Adrenal gland (tissue), 19 donors: ENCODE measurements at regions of chr17 and their contacts with region 1.

Region 1: DNA sequence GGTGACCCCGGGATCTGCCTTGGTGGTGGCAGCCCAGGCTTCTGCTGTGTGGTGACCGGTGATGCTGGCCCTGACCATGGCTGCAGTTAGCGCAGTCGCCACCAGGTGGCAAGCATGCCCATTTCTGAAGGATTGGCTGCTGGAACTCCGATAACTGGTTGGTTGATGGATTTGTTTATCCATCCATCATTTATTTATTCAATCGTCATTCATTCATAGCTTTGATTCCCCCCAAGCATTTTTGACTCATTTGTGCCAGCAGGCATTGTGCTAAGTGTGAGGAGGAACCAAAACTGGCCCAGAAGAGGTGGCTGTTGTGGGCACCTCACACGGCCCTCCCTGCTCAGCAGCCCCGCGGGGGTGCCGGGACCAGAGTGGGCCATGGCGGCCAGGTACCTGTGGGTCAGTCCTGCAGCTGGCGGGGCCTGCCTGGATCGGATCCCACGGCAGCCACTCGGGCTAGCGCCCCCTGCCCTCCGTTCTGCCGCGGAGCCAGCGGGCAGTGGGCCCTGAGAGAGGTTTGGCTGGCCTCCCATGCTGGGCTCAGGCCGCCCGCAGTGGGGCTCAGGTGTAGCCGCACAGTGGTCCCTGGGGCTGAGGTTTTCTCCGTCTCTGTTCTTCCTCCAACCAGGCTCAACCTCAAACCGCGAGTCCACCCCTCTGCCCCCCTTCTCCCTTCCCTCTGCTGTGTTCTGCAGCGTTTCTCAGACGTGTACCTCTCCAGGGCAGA is 28.8 kb upstream of the ITGA3 start:
- DNase-seq: peak; percentile 76 to 97 (median 90)
- H3K4me3 ChIP-seq: peak overlapping the region in 1 of 4 donors; percentile 41
- H3K27ac ChIP-seq: peak overlapping the region in 3 of 5 donors; percentile 48 to 83 (median 75)
- H3K4me1 ChIP-seq: peaks cover 12 to 13% of the 10 kb centered on the region in 2 donors
- H3K27me3 ChIP-seq: no peaks in the 10 kb centered on the region
- CTCF ChIP-seq: peak; percentile 93 to 99 (median 97)
- POLR2A ChIP-seq: no peak

Region 2: GRCh38 chr17:49968380-49969133 is 58.5 kb before region 1 on chr17:
- intact Hi-C with region 1: no loop called
- DNase-seq: peak in 6 of 7 donors; percentile 42 to 61 (median 58)
- H3K4me3 ChIP-seq: peak overlapping the region in 2 of 4 donors; percentile 30 to 57
- H3K27ac ChIP-seq: no peak overlapping the region
- H3K4me1 ChIP-seq: peaks cover 16 to 25% of the 10 kb centered on the region in 2 donors
- H3K27me3 ChIP-seq: peaks cover 94% of the 10 kb centered on the region
- CTCF ChIP-seq: no peak
- POLR2A ChIP-seq: no peak

Region 3: DNA sequence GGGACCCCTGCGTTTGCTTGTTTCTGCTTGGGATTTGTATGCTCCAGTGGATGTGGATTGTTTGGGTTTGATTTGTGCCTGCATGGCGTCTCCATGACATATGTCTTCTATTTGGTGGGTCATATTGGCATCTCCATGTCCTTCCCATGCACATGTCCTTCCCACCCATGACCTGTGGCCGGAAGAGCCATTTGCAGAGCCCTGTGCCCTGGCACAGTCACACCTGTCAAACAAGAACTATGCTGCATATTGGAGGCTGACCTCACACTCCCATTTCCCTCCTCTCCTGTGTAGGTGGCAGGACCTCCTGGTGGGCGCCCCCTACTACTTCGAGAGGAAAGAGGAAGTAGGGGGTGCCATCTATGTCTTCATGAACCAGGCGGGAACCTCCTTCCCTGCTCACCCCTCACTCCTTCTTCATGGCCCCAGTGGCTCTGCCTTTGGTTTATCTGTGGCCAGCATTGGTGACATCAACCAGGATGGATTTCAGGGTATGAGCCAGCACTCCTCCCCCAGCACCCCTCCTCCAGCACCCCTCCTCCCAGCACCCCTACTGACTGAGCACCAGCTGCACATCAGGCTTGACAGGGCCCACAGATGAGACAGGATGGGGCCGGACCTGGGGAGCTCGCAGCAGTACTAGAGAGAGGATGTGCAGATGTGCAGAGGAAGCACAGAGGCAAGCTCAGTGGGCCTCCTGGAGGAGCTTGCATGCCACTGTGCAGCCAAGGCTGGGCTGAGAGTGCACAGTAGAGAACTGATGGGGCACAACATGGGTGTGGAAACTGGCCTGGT is 44.8 kb after region 1 on chr17:
- intact Hi-C with region 1: loop called in 1 of 2 experiments (anchors 5 kb)
- DNase-seq: no peak
- H3K4me3 ChIP-seq: no peak overlapping the region
- H3K27ac ChIP-seq: no peak overlapping the region
- H3K4me1 ChIP-seq: peaks cover 0 to 8% of the 10 kb centered on the region in 2 donors
- H3K27me3 ChIP-seq: no peaks in the 10 kb centered on the region
- CTCF ChIP-seq: no peak
- POLR2A ChIP-seq: no peak

Region 4: GRCh38 chr17:50087912-50088405 is 60.9 kb after region 1 on chr17:
- intact Hi-C with region 1: loop called (anchors 2 kb)
- DNase-seq: no peak
- H3K4me3 ChIP-seq: no peak overlapping the region
- H3K27ac ChIP-seq: no peak overlapping the region
- H3K4me1 ChIP-seq: no peaks in the 10 kb centered on the region
- H3K27me3 ChIP-seq: no peaks in the 10 kb centered on the region
- CTCF ChIP-seq: no peak
- POLR2A ChIP-seq: no peak